Mammary epithelial cell (primary cell): ENCODE measurements at regions of chr17 and their contacts with region 1.

Region 1: GRCh38 chr17:82767041-82767754 is 15.3 kb downstream of the TBCD start:
- DNase-seq: peak; percentile 30
- H3K4me3 ChIP-seq: no peak overlapping the region
- H3K27ac ChIP-seq: no peak overlapping the region
- H3K4me1 ChIP-seq: no peaks in the 10 kb centered on the region
- H3K27me3 ChIP-seq: no peaks in the 10 kb centered on the region
- CTCF ChIP-seq: peak; percentile 67 to 70

Region 2: GRCh38 chr17:82351716-82352488 is 415.3 kb before region 1 on chr17:
- CTCF ChIA-PET with region 1: no interaction called
- dilution Hi-C with region 1: no loop called
- in situ Hi-C with region 1: loop called in 1 of 2 experiments (anchors 10 kb)
- intact Hi-C with region 1: loop called (anchors 5 kb)
- DNase-seq: peak; percentile 64
- H3K4me3 ChIP-seq: no peak overlapping the region
- H3K27ac ChIP-seq: no peak overlapping the region
- H3K4me1 ChIP-seq: peaks cover 20% of the 10 kb centered on the region
- H3K27me3 ChIP-seq: no peaks in the 10 kb centered on the region
- CTCF ChIP-seq: peak; percentile 86 to 94

Region 3: GRCh38 chr17:82424001-82424862 is 343.0 kb before region 1 on chr17:
- CTCF ChIA-PET with region 1: no interaction called
- dilution Hi-C with region 1: no loop called
- in situ Hi-C with region 1: no loop called
- intact Hi-C with region 1: no loop called
- DNase-seq: peak; percentile 21
- H3K4me3 ChIP-seq: no peak overlapping the region
- H3K27ac ChIP-seq: no peak overlapping the region
- H3K4me1 ChIP-seq: peaks cover 5% of the 10 kb centered on the region
- H3K27me3 ChIP-seq: no peaks in the 10 kb centered on the region
- CTCF ChIP-seq: peak; percentile 59 to 82

Region 4: GRCh38 chr17:82804442-82805191 is 37.4 kb after region 1 on chr17:
- CTCF ChIA-PET with region 1: no interaction called
- dilution Hi-C with region 1: no loop called
- in situ Hi-C with region 1: no loop called
- intact Hi-C with region 1: no loop called
- DNase-seq: no peak
- H3K4me3 ChIP-seq: no peak overlapping the region
- H3K27ac ChIP-seq: no peak overlapping the region
- H3K4me1 ChIP-seq: no peaks in the 10 kb centered on the region
- H3K27me3 ChIP-seq: no peaks in the 10 kb centered on the region
- CTCF ChIP-seq: no peak